OCI-LY7 (cell line): ENCODE measurements at regions of chr13 and their contacts with region 1.

Region 1: DNA sequence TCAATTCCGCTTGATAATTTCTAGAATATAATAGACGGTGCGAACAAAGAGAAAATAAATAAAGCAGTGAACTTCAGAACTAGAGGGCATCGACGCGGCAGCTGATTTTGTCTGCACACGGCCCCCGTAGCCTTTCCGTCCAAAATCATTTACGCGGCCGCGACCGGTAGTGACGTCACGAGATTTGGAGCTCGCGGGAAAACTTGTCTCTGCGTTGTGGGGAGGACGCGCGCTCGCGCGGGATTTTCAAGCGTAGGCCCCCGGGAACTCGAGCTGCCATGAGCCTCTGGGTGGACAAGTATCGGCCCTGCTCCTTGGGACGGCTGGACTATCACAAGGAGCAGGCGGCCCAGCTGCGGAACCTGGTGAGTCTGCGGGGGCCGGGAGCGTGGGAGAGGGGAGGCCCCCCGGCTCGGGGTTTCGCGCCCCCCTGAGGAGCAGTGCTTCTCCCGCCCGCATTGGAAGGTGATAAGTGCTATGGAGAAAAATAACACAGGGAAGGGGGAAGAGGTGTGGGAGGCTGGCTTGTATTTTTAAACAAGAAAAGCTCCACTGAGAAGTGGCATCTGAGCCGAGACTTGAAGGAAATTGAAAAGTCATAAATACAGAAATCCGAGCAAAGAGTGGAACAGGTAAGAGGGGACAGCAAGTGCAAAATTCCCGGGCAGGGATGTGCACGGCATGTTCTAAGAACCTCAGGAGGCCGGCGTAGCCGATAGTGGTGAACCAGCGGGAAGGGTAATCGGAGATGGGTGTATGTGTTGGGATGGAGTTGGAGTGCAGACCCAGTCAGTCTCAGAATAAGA is at the start of gene RFC3:
- DNase-seq: peak; percentile 97
- H3K4me3 ChIP-seq: peak within 1 kb of the TSS; percentile 98
- H3K27ac ChIP-seq: peak within 1 kb of the TSS; percentile 76
- H3K4me1 ChIP-seq: peaks cover 59% of the 10 kb centered on the region
- CTCF ChIP-seq: peak; percentile 51; the same call in 1 of the 2 replicates
- total RNA-seq, gene RFC3: 97.6 and 108 TPM in 2 replicates

Region 2: DNA sequence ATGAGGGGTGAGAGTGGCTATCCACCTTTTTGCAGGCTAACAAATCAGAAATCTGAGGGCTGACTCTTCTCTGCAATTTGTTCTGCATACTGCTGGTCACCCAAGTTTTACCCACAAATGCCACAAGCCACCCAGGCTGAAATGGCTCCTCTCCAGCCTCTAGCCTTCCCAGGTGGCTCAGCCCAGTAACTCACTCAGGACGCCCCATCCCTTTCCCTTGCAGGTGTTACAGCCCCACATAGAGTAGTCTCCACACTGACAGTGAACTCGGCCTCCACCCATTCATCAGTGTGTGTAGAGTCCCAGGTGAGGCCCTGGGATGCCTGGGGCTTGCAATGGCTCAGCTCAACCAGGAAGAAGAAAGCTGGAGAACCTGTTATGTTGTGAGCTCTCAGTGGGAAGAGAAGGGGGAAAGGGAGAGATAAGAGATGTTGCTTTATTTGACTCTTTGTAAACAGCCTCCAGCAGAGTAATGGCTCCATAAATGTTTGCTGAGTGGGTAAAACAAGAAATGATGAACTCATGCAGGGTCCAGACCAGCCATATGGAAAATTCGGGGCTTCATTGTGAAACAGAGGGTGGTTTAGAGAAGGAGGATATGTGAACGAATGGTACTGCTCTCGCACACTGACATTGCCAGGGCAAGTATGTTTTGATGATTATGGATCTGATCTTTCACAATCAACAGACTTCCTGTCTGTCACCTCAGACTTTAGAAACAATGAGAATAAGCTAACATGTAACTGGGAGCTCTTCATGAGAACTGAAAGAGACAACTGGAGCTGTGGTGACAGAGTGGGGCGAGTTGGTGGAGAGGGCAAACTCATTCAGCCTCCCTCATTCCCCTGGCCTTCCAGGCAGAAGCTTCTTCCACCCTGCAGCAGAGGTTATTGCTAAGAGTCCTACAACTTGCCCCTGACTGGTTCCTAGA is 74.4 kb before region 1 on chr13:
- CTCF ChIA-PET with region 1: interaction called, 3 read pairs
- POLR2A ChIA-PET with region 1: interaction called, 5 read pairs
- intact Hi-C with region 1: loop called (anchors 2 kb)
- DNase-seq: peak; percentile 56
- H3K4me3 ChIP-seq: peak overlapping the region; percentile 11
- H3K27ac ChIP-seq: peak overlapping the region; percentile 99
- H3K4me1 ChIP-seq: peaks cover 86% of the 10 kb centered on the region
- CTCF ChIP-seq: no peak

Region 3: DNA sequence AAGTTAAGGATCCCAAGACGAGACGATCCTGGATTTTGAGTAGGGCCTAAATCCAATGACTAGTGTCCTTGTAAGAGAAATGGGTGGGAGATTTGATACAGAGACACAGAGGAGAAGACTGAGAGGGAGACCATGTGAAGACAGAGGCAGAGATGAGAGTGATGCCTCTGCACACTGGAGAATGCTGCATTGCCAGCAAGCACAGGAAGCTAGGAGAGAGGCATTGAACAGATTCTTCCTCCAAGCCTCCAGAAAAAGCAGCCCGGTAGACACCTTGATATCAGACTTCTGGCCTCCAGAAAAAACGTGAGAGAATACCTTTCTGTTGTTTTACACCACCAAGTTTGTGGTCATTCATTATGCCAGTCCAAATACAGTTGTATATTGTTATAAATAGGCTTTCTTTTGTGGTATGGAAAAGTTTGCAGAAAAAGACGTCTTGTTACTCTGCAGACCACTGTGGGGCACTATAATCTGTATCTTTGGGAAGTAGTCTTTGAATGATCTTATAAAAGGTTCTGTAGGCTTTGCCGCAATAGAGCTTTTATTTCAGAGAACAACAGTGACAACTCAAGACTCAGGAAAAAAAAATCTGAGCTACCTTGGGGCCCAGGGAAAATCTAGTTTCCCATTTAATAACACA is 18.0 kb before region 1 on chr13:
- CTCF ChIA-PET with region 1: no interaction called
- POLR2A ChIA-PET with region 1: interaction called, 26 read pairs
- intact Hi-C with region 1: no loop called
- DNase-seq: peak; percentile 76
- H3K4me3 ChIP-seq: no peak overlapping the region
- H3K27ac ChIP-seq: peak overlapping the region; percentile 43
- H3K4me1 ChIP-seq: peaks cover 49% of the 10 kb centered on the region
- CTCF ChIP-seq: peak; percentile 91

Region 4: DNA sequence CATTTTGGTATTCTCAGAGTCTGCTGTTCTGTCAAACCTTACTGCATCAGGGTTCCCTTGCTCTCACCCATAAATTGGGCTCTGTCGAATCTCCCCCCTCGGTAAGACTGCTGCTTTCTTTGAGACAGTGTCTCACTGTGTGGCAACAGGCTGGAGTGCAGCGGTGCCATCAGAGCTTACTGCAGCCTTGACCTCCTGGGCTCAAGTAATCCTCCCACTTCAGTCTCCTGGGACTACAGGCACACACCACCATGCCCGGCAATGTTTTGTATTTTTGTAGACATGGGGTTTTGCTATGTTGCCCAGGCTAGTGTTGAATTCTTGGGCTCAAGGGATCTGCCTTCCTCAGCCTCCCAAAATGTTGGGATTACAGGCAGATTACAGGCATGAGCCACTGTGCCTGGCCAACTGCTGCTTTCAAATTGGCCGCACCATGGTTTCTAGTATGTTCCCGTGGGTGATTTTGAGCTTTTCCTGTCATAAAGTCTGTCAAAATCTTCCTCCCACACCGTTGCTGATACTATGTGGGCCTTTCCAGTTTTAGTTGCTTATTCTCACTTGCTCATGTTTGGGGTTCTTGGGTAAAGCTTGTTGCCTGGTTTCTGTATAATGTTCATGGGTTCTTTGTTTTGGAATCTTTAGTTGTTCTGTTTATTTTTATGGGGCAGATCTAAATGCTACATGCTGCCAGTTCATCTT is 10.5 kb after region 1 on chr13:
- CTCF ChIA-PET with region 1: no interaction called
- POLR2A ChIA-PET with region 1: interaction called, 12 read pairs
- intact Hi-C with region 1: no loop called
- DNase-seq: no peak
- H3K4me3 ChIP-seq: no peak overlapping the region
- H3K27ac ChIP-seq: no peak overlapping the region
- H3K4me1 ChIP-seq: peaks cover 3% of the 10 kb centered on the region
- CTCF ChIP-seq: no peak

Region 5: GRCh38 chr13:34044660-34045080 is 226.6 kb after region 1 on chr13:
- CTCF ChIA-PET with region 1: no interaction called
- POLR2A ChIA-PET with region 1: no interaction called
- intact Hi-C with region 1: no loop called
- DNase-seq: no peak
- H3K4me3 ChIP-seq: no peak overlapping the region
- H3K27ac ChIP-seq: no peak overlapping the region
- H3K4me1 ChIP-seq: peaks cover 2% of the 10 kb centered on the region
- CTCF ChIP-seq: no peak